Activated B cell treated with CpG ODN at 0.5 μM for 24 hours (primary cell): ENCODE measurements at regions of chr10 and their contacts with region 1.

Region 1: DNA sequence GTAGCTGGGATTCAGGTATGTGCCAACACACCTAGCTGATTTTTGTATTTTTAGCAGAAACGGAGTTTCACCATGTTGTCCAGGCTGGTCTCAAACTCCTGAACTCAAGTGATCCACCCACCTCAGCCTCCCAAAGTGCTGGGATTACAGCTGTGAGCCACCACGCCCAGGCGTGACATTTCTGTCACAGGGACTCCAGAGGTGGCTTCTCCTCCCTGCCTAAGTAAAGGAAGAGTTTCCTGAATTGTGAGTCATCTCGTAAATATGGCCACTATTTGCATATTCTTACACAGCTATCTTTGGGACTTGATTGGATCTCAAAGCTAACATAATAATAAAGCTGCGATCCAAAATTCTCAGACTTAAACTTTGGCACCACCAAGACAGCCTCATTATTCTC is 50.2 kb downstream of the ADARB2 start:
- DNase-seq: no peak
- ATAC-seq: no peak
- H3K4me3 Mint-ChIP-seq: no peak overlapping the region
- H3K27ac Mint-ChIP-seq: no peak overlapping the region
- H3K4me1 Mint-ChIP-seq: no peaks in the 10 kb centered on the region
- H3K27me3 Mint-ChIP-seq: peaks cover 38% of the 10 kb centered on the region
- CTCF ChIP-seq: no peak

Region 2: GRCh38 chr10:1709161-1709560 is 22.0 kb after region 1 on chr10:
- CTCF ChIA-PET with region 1: no interaction called
- POLR2A ChIA-PET with region 1: no interaction called
- intact Hi-C with region 1: loop called (anchors 2 kb)
- DNase-seq: no peak
- ATAC-seq: no peak
- H3K4me3 Mint-ChIP-seq: no peak overlapping the region
- H3K27ac Mint-ChIP-seq: no peak overlapping the region
- H3K4me1 Mint-ChIP-seq: peaks cover 25% of the 10 kb centered on the region
- H3K27me3 Mint-ChIP-seq: peaks cover 39% of the 10 kb centered on the region
- CTCF ChIP-seq: no peak